GM10248 (cell line): ENCODE measurements at regions of chr19 and their contacts with region 1.

Region 1: GRCh38 chr19:45478454-45479238 is 10.8 kb downstream of the FOSB start:
- DNase-seq: peak; percentile 79
- CTCF ChIP-seq: peak; percentile 91

Region 2: DNA sequence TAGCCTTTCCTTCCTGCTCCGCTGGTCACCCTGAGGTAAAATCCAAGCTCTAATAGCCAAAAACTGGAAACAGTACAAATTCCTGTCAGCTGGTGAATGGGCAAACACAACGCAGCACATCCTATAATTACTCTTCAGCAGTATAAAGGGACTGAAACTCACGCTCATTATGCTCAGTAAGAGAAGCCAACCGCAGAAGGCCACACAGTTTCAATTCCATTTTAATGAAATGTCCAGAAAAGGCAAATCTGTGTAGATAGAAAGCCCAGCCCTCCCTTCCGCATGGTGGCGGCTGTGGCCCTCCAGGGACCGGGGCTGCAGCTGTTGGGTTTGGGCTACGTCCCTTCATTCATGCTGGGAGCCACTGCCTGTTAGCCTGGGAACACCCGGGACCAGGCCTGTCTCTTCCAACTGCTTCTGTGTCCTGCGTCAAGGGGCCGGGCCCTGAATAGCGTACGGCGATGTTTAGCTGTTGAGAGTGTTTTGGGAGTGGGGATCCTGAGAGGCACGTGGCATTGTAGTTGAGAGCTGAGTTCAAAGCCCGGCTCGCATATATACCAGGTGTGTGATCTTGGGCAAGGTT is 341.4 kb before region 1 on chr19:
- CTCF ChIA-PET with region 1: no interaction called
- POLR2A ChIA-PET with region 1: no interaction called
- DNase-seq: peak; percentile 86
- CTCF ChIP-seq: peak; percentile 40

Region 3: GRCh38 chr19:45405435-45406225 is 73.0 kb before region 1 on chr19:
- CTCF ChIA-PET with region 1: interaction called, 16 read pairs
- POLR2A ChIA-PET with region 1: no interaction called
- DNase-seq: peak; percentile 88
- CTCF ChIP-seq: no peak

Region 4: DNA sequence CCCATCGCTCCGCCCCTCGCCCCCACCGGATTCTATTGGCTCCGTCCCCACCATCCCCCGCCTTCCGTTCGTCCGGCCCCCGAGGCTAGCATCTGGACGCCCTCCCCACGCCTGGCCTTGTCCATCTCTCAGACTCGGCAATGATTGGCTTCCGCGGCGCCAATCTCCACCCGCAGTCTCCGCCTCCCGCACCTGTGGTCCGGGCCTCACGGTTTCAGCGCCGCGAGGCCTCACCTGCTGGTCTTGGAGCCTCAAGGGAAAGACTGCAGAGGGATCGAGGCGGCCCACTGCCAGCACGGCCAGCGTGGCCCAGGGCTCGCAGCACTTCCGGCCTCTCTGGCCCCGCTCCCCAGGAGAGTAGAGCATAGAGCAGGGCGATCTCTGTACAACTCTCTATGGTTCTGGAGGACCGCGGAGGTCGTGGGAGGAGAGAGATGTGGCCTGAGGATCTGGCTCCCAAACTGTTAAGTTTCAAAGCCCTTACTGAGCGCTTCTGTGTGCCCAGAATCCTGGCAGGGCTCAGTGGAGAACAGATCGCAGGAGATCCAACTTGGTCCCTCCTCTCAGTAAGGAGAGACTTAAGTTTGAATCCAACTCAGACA is 55.0 kb before region 1 on chr19 and contains the start of gene ERCC1:
- CTCF ChIA-PET with region 1: interaction called, 86 read pairs
- POLR2A ChIA-PET with region 1: no interaction called
- DNase-seq: peak; percentile 98
- CTCF ChIP-seq: no peak

Region 5: GRCh38 chr19:45496349-45496953 is 17.8 kb after region 1 on chr19:
- CTCF ChIA-PET with region 1: interaction called, 91 read pairs
- POLR2A ChIA-PET with region 1: no interaction called
- DNase-seq: peak; percentile 48
- CTCF ChIP-seq: no peak

Region 6: GRCh38 chr19:45558399-45558878 is 79.8 kb after region 1 on chr19:
- CTCF ChIA-PET with region 1: interaction called, 10 read pairs
- POLR2A ChIA-PET with region 1: no interaction called
- DNase-seq: peak; percentile 87
- CTCF ChIP-seq: peak; percentile 65